Naive thymus-derived CD4-positive, alpha-beta T cell (primary cell): ENCODE measurements at regions of chr13 and their contacts with region 1.

Region 1: GRCh38 chr13:75621147-75621546 is 15.0 kb upstream of the LMO7 start:
- DNase-seq: no peak
- ATAC-seq: no peak
- H3K4me3 ChIP-seq: no peak overlapping the region
- H3K4me3 Mint-ChIP-seq: no peak overlapping the region
- H3K27ac ChIP-seq: no peak overlapping the region
- H3K27ac Mint-ChIP-seq: no peak overlapping the region
- H3K4me1 ChIP-seq: no peaks in the 10 kb centered on the region
- H3K4me1 Mint-ChIP-seq: no peaks in the 10 kb centered on the region
- H3K27me3 ChIP-seq: no peaks in the 10 kb centered on the region
- H3K27me3 Mint-ChIP-seq: no peaks in the 10 kb centered on the region

Region 2: DNA sequence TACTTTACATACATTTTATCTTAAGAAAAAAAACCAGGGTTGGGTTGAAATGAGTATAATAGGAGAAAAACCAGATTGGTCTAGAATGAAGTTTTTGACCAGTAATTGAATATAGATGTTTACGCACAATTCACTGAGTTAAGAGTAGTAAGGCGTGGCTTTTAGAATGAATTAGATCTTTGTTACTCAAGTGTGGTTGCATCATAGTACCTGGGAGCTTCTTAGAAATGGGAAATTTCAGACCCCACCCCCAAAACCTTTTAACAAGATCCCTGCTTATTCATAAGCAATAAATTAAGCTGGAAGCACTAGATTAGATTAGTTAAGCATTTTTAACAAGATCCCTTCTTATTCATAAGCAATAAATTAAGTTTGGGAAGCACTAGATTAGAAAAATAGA is 13.7 kb before region 1 on chr13:
- CTCF ChIA-PET with region 1: no interaction called
- POLR2A ChIA-PET with region 1: no interaction called
- intact Hi-C with region 1: loop called in 1 of 2 experiments (anchors 1 kb)
- DNase-seq: no peak
- ATAC-seq: no peak
- H3K4me3 ChIP-seq: no peak overlapping the region
- H3K4me3 Mint-ChIP-seq: no peak overlapping the region
- H3K27ac ChIP-seq: no peak overlapping the region
- H3K27ac Mint-ChIP-seq: no peak overlapping the region
- H3K4me1 ChIP-seq: no peaks in the 10 kb centered on the region
- H3K4me1 Mint-ChIP-seq: no peaks in the 10 kb centered on the region
- H3K27me3 ChIP-seq: no peaks in the 10 kb centered on the region
- H3K27me3 Mint-ChIP-seq: no peaks in the 10 kb centered on the region

Region 3: DNA sequence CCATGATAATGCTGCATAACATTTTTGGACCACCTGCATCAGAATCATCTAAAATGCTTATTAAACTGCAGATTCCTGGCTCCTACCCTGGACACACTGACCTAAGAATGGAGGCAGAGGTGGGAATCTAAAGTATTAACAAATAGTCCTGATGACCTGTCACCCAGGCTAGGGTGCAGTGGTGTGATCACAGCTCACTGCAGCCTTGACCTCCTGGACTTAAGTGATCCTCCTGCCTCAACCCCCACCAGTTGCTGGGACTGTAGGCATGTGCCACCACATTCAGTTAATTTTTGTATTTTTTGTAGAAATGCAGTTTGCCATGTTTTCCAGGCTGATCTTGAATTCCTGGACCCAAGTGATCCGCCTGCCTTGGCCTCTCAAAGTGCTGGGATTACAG is 58.3 kb after region 1 on chr13:
- CTCF ChIA-PET with region 1: no interaction called
- POLR2A ChIA-PET with region 1: no interaction called
- intact Hi-C with region 1: no loop called
- DNase-seq: no peak
- ATAC-seq: no peak
- H3K4me3 ChIP-seq: no peak overlapping the region
- H3K4me3 Mint-ChIP-seq: no peak overlapping the region
- H3K27ac ChIP-seq: no peak overlapping the region
- H3K27ac Mint-ChIP-seq: no peak overlapping the region
- H3K4me1 ChIP-seq: no peaks in the 10 kb centered on the region
- H3K4me1 Mint-ChIP-seq: no peaks in the 10 kb centered on the region
- H3K27me3 ChIP-seq: no peaks in the 10 kb centered on the region
- H3K27me3 Mint-ChIP-seq: no peaks in the 10 kb centered on the region